Heart left ventricle (tissue), 16 donors: ENCODE measurements at regions of chr13 and their contacts with region 1.

Region 1: GRCh38 chr13:26698392-26699196 is 62.0 kb downstream of the GPR12 start:
- DNase-seq: peak; percentile 66 to 85 (median 74)
- ATAC-seq: peak; percentile 62 to 91 (median 83)
- H3K4me3 ChIP-seq: peak overlapping the region in 8 of 12 donors; percentile 12 to 46 (median 28)
- H3K27ac ChIP-seq: no peak overlapping the region
- H3K4me1 ChIP-seq: peaks cover 0 to 7% (median 0%) of the 10 kb centered on the region in 12 donors
- H3K27me3 ChIP-seq: no peaks in the 10 kb centered on the region
- CTCF ChIP-seq: peak; percentile 92 to 99 (median 98)
- POLR2A ChIP-seq: no peak

Region 2: DNA sequence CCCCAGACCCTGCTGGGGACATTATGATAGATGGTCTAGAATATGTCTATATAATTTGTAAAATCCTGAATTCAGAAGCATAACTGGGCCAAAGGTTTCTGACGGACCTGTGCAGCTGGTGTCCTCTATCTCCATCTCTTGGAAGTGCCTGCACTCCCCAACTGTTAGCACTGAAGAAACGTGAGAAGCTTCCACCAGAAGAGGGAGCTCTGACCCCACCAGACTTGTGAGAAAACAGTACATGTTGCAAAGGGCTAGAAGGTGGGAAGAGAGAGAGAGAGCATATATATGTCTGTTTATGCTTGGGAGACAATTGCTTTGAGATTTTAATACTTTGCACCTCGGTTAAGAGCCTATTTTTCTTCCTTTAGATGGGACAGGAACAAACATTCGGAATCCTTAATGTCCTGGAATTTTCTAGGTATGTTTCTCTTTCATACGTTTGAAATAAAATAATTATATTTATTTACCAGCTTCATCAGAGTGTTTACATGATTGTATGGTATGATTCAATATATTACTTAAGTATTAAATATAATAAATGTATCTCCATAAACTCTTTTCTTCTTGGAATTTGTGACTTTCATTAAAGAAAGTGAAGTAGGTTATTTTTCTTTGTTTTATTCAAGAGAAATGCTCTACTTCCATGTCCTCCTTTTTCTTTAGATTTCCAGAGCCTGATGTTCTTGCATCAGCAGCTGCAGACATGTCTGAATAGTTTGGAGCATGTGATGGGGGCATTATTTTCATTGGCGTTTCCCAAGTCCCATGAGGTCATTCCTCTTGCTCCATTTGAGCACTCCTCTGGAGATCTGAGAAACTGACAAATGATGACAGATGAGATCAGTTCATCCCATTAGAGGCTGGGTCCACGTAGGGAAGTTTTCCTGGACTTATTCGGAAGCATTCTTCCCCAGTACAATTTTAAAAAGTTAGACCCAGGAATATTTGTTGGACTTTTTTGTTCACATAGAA is 1123.9 kb before region 1 on chr13:
- intact Hi-C with region 1: loop called in 1 of 10 experiments (anchors 5 kb)
- DNase-seq: peak in 4 of 5 donors; percentile 71 to 77 (median 75)
- ATAC-seq: peak; percentile 82 to 97 (median 92)
- H3K4me3 ChIP-seq: no peak overlapping the region
- H3K27ac ChIP-seq: no peak overlapping the region
- H3K4me1 ChIP-seq: no peaks in the 10 kb centered on the region
- H3K27me3 ChIP-seq: peaks cover 0 to 56% (median 8%) of the 10 kb centered on the region in 9 donors
- CTCF ChIP-seq: peak; percentile 66 to 91 (median 79)
- POLR2A ChIP-seq: no peak

Region 3: DNA sequence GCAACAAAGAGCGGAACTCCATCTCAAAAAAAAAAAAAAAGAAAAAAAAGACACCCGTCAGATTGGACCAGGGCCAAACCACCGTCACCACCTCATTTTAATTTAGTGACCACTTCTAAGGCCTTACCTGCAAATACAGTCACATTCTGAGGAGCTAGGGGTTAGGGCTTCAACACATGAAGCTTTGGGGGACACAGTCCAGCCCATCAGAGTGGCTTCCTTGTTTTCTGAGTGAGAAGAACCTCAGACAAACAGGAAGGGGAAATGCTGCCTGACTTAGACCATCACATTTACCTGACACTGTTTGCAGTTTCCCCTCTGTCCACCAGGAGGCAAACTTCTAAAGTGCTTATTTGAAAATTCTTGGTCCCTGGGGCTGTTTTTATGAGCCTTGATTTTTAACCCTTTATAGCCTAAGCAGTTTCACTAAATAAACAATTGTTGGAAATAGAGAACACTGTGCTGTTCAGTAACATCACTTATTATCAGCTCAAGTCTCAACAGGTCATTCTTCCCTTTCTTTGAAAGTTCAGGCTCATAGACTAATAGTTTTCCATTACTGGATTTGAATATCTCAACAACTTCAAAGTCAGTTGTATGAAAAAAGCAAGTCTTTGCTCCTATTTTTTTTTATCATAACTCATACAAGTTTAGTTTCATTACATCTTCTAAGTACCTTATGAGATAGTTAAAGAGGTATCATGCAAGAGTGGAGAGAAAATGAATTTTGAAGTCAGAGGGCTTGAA is 216.0 kb before region 1 on chr13:
- intact Hi-C with region 1: loop called in 9 of 10 experiments (anchors 2 to 10 kb)
- DNase-seq: peak in 2 of 5 donors; percentile 37 to 51
- ATAC-seq: peak in 1 of 4 donors; percentile 32
- H3K4me3 ChIP-seq: no peak overlapping the region
- H3K27ac ChIP-seq: no peak overlapping the region
- H3K4me1 ChIP-seq: peaks cover 0 to 22% (median 4%) of the 10 kb centered on the region in 12 donors
- H3K27me3 ChIP-seq: no peaks in the 10 kb centered on the region
- CTCF ChIP-seq: peak; percentile 70 to 92 (median 82)
- POLR2A ChIP-seq: no peak

Region 4: DNA sequence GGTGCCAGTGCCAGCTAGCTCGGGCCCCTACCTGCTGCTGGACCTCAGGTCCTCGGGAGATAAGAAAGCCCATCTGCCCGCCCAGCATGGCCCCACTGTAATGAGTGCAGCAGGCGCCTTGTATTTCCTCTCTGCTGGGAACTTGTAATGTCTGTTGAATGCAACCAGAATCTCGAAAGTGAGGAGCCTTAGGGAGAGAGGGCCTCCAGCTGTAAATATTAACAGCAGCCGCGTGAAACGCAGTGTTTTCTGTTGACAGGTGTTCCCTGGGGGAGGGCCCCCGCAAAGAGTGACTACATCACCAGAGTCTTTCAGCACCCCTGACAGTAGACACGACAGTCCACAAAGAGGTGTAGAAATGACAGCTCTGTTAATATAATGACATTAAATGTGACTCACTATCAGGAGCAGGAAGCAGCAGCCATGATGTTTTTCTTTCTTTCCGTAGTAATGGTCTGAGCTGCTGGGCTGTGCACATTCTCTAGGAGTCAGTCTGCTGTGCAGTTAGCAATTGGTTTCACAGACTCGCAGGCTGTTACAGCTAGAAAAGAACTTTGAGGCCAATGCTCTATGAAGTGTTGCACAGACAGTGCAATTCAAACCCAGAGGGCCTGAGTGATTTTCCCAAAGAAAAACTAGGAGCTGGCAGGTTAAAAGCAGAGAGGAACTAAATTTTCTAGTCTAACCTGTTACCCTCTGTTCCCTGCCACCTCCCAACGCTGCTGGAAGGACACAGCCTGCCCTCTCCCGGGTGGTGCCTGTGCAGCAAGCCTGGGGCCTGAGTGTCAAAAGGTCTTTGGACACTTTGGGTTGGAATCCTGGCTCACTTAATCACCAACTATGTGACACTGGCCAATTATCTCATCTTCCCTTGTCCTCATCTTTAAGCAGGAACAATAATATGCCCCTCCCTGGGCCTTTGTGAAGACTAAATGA is 199.7 kb before region 1 on chr13:
- intact Hi-C with region 1: loop called in 3 of 10 experiments (anchors 2 to 5 kb)
- DNase-seq: no peak
- ATAC-seq: peak in 3 of 4 donors; percentile 12 to 51 (median 27)
- H3K4me3 ChIP-seq: no peak overlapping the region
- H3K27ac ChIP-seq: peak overlapping the region in 2 of 12 donors; percentile 13 to 15
- H3K4me1 ChIP-seq: peaks cover 0 to 11% (median 0%) of the 10 kb centered on the region in 12 donors
- H3K27me3 ChIP-seq: peaks cover 0 to 5% (median 0%) of the 10 kb centered on the region in 9 donors
- CTCF ChIP-seq: peak in 1 of 12 donors; percentile 3
- POLR2A ChIP-seq: no peak

Region 5: DNA sequence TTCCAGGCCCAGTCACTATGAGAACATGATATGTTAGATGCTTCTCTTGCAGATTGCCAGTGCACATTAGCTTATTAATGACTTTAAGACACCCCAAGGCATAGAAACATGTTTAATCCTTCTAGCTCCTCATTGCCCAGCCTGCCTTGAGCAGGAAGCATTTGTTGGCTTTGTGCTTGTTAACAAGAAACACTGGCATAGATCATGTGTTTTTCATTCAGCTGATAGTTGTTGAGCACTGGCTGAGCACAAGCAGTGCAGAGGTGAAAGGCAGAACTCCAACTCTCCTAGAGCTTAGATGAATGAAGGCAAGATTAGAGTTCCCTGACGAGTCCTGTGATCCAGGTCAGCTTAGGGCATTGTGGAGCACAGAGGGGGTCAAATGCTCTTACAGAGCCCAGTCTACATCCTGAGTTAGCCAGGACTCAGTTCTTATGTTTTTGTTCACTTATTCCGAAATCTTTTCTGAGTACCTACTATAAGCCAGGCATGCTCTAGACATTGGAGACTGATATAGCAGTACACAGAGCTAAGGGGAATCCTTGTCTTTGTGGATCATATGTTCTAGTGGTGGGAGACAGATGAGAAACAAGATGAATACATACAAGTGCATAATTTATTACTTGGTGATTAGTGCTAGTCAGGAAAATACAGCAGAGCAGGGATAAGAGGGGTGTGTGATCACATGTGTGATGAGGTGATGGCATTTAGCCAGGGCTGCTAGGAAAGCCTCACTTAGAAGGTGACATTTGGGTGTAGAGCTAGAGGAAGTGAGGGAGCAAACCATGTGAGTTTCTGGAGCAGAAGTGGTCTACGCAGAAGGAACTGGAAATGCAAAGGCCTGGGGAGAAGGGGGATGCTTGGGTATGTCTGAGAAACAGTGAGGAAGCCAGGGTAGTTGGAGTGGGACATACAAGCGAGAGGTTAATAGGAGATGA is 39.9 kb before region 1 on chr13:
- intact Hi-C with region 1: loop called in 1 of 10 experiments (anchors 2 kb)
- DNase-seq: peak in 1 of 5 donors; percentile 37
- ATAC-seq: peak; percentile 75 to 95 (median 90)
- H3K4me3 ChIP-seq: no peak overlapping the region
- H3K27ac ChIP-seq: peak overlapping the region in 3 of 12 donors; percentile 4 to 41 (median 13)
- H3K4me1 ChIP-seq: peaks cover 0 to 14% (median 4%) of the 10 kb centered on the region in 12 donors
- H3K27me3 ChIP-seq: no peaks in the 10 kb centered on the region
- CTCF ChIP-seq: no peak
- POLR2A ChIP-seq: no peak

Region 6: GRCh38 chr13:26749285-26749684 is 50.7 kb after region 1 on chr13:
- intact Hi-C with region 1: no loop called
- DNase-seq: no peak
- ATAC-seq: no peak
- H3K4me3 ChIP-seq: no peak overlapping the region
- H3K27ac ChIP-seq: no peak overlapping the region
- H3K4me1 ChIP-seq: no peaks in the 10 kb centered on the region
- H3K27me3 ChIP-seq: peaks cover 0 to 35% (median 10%) of the 10 kb centered on the region in 9 donors
- CTCF ChIP-seq: no peak
- POLR2A ChIP-seq: no peak